Body of pancreas (tissue), 4 donors: ENCODE measurements at regions of chr2 and their contacts with region 1.

Region 1: GRCh38 chr2:43239981-43240761 is 13.8 kb upstream of the ZFP36L2 start:
- DNase-seq: no peak
- ATAC-seq: no peak
- H3K4me3 ChIP-seq: no peak overlapping the region
- H3K27ac ChIP-seq: peak overlapping the region in 2 of 4 donors; percentile 24 to 63
- H3K4me1 ChIP-seq: no peaks in the 10 kb centered on the region
- H3K27me3 ChIP-seq: no peaks in the 10 kb centered on the region
- CTCF ChIP-seq: peak in 2 of 7 experiments; percentile 6 to 14
- POLR2A ChIP-seq: no peak

Region 2: GRCh38 chr2:42844901-42845821 is 395.0 kb before region 1 on chr2:
- intact Hi-C with region 1: loop called (anchors 10 kb)
- DNase-seq: no peak
- ATAC-seq: peak; percentile 27
- H3K4me3 ChIP-seq: no peak overlapping the region
- H3K27ac ChIP-seq: no peak overlapping the region
- H3K4me1 ChIP-seq: no peaks in the 10 kb centered on the region
- H3K27me3 ChIP-seq: no peaks in the 10 kb centered on the region
- CTCF ChIP-seq: no peak
- POLR2A ChIP-seq: no peak

Region 3: DNA sequence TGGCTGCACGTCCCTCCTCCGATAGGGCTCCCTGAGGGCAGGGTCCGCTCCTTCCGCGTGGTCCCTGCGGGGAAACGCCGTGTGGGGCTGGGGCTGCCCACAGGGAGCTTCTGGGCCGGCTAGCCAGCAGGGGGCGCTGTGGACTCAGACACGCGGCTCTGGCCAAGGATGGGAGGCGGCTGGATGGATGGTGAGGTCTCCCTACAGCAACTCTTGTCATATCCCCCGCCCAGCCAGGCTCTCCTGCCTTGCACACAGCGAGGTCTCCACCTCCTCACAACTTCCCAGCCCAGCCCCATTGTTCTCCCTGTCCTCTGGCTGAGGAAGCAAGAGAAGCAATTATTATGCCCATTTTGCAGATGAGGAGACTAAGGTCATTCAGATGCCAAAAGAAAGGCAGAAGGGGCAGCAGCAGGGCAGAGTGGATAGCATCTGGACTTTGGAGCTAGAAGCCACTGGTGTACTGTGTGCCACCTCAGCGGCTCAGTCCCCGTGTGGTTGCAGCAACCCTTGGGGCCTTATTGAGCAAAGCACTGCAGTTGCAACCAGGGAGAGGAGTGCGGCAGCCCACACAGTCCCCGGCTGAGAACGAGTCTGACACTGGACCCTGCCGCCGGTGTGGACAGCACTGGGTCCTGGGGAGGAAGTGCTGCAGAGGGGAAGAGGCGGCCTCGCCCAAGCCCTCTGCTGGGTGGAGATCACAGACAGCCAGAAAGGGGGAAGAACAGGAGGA is 112.8 kb before region 1 on chr2:
- intact Hi-C with region 1: loop called (anchors 10 kb)
- DNase-seq: peak; percentile 60 to 70 (median 66)
- ATAC-seq: no peak
- H3K4me3 ChIP-seq: no peak overlapping the region
- H3K27ac ChIP-seq: peak overlapping the region in 1 of 4 donors; percentile 77
- H3K4me1 ChIP-seq: peaks cover 24% of the 10 kb centered on the region
- H3K27me3 ChIP-seq: no peaks in the 10 kb centered on the region
- CTCF ChIP-seq: peak; percentile 16 to 59 (median 38)
- POLR2A ChIP-seq: peak in 1 of 3 donors; percentile 44

Region 4: DNA sequence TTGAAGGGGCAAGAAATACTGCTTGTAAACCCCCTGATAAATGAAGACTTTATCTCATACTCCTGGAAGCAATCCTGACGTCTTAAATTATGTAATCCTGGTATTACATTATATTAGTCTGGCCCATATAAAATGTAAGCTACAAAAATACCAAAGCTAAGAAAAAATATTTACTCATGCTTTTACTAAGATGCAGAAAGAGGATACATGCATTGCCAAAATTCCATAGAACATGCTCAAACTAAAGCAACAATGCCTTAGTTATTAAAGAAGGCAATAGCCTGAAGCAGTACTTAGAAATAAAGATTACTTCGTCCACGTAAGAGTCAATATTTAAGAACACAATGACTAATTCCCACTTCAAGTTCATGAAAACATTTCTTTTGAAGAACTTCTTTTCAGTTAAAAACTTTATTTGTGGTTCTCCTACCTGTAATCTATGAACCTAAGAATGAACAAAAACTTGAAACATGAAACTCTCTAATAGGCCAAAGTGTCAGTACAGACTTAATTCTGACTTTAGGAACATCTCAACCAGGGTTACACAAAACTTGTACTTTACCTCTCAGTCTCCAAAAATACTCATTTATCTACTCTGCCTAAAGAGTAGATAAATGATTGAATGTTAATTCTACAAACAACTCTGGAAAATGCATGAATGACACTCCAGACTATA is 238.4 kb after region 1 on chr2:
- intact Hi-C with region 1: loop called (anchors 10 kb)
- DNase-seq: no peak
- ATAC-seq: no peak
- H3K4me3 ChIP-seq: no peak overlapping the region
- H3K27ac ChIP-seq: no peak overlapping the region
- H3K4me1 ChIP-seq: peaks cover 10% of the 10 kb centered on the region
- H3K27me3 ChIP-seq: no peaks in the 10 kb centered on the region
- CTCF ChIP-seq: no peak
- POLR2A ChIP-seq: no peak